AG04449 (cell line): ENCODE measurements at regions of chr1 and their contacts with region 1.

Region 1: DNA sequence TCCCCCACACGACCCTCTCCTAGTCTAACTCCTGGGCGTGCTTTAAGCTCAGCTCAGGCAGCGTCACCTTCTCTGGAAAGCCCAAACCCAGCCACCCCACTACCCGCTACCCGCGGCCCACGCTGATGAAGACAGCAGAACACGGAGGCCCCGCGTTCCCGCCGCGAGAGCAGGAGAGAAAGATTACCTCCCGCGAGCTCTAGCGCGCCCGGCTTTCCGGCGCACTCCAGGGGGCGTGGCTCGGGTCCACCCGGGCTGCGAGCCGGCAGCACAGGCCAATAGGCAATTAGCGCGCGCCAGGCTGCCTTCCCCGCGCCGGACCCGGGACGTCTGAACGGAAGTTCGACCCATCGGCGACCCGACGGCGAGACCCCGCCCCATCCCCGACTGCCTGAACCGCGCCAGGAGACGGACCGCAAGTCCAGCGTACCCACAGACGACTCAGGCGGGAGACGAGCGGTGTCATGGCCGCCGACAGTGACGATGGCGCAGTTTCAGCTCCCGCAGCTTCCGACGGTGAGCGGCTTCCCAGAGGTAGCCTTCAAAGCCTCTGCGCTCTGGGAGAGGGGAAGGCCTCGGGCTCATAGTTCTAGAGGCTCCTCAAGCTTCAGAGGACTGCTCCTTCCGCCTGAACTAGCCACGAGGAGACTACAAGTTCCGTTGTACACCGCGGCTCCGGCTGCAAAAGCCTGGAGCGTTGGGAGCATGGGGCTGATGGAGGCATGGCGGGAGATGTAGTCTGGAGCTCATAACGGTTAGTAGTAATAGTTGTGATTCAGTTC is at the starts of genes MUTYH and TOE1:
- DNase-seq: peak; percentile 36
- H3K4me3 ChIP-seq: peak within 1 kb of the TSS; percentile 97
- CTCF ChIP-seq: no peak

Region 2: DNA sequence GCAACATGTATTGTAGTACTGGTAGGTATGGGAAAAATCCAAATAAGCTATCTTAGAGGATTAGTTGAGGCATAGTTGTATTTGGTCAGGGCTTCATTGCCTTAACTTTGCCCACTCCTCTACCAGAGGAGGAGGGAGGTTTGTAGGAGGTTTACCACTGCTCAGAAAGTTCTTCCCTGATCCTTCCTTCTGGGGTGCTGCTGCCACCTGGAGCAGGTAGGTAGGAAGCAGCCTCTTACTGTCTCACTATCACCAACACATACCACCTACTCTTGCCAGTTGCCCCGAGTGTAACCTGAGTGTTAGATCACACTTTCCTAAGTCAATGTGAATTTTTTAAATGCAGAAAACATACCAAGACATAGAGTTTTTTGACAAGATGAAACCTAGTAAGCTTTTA is 109.4 kb before region 1 on chr1:
- CTCF ChIA-PET with region 1: no interaction called
- POLR2A ChIA-PET with region 1: no interaction called
- DNase-seq: no peak
- H3K4me3 ChIP-seq: no peak overlapping the region
- CTCF ChIP-seq: no peak

Region 3: DNA sequence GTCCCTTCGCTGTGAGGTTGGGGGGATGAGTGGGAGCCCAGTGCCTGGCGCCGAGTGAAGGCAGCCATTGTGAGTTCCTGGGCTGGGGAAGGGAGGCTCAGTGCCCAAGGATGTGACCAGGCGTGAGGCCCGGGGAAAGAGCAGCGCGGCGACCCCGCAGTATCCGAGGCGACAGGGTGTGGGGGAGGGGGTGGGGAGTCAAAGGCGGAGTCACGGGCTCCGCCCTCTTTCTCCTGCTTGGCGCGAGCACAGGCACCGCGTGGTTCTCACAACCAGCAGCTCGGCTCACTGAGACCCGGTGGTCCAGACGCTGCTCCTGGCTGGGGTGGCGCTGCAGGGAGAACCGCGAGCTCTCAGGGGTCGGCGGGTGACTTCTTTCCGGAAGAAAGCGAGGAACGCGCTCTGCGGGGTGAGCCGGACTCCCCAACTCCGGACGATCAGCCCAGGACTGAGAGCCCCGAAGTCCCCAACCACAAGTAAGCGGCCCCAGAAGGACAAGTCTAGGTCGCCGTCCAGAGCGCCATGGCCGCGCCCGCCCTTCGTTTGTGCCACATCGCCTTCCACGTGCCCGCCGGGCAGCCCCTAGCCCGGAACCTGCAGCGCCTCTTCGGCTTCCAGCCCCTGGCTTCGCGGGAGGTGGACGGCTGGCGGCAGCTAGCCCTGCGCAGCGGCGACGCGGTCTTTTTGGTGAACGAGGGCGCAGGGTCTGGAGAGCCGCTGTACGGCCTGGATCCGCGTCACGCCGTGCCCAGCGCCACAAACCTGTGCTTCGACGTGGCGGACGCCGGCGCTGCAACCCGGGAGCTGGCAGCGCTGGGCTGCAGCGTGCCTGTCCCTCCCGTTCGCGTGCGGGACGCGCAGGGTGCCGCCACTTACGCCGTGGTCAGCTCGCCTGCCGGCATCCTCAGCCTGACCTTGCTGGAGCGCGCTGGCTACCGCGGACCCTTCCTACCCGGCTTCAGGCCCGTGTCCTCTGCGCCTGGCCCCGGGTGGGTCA is 13.1 kb before region 1 on chr1 and contains the start of gene HPDL:
- CTCF ChIA-PET with region 1: interaction called, 22 read pairs
- POLR2A ChIA-PET with region 1: interaction called, 9 read pairs
- DNase-seq: no peak
- H3K4me3 ChIP-seq: peak within 1 kb of the TSS; percentile 61
- CTCF ChIP-seq: no peak

Region 4: GRCh38 chr1:45490626-45491486 is 150.9 kb after region 1 on chr1 and contains the start of gene TESK2:
- CTCF ChIA-PET with region 1: interaction called, 39 read pairs
- POLR2A ChIA-PET with region 1: interaction called, 3 read pairs
- DNase-seq: peak; percentile 94
- H3K4me3 ChIP-seq: peak within 1 kb of the TSS; percentile 91
- CTCF ChIP-seq: peak; percentile 16